A673 (cell line): ENCODE measurements at regions of chr10 and their contacts with region 1.

Region 1: GRCh38 chr10:98404571-98405359 is 10.2 kb downstream of the PYROXD2 start:
- DNase-seq: peak; percentile 23
- H3K4me3 ChIP-seq: no peak overlapping the region
- H3K27ac ChIP-seq: no peak overlapping the region
- H3K4me1 ChIP-seq: peaks cover 7% of the 10 kb centered on the region
- H3K27me3 ChIP-seq: no peaks in the 10 kb centered on the region
- CTCF ChIP-seq: no peak

Region 2: DNA sequence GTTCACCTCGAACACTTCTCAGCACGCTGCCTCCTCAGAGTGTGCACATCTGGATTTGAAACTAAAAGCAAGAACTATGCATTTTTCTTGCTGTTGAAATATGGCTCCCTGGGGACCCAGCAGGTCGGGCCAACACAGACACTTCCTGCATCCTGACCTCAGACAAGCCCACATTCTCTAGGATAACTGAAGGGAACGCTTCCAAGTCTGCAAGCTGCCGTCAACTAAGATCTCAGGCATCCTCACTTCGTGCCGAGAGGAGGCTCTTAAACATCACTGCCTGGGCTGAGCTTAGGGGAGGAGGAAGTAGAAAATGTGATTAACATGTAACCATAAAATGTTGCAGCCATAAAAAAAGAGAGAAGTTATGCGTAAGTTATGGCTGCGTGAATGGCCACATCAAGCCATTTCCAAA is 55.2 kb before region 1 on chr10:
- CTCF ChIA-PET with region 1: no interaction called
- POLR2A ChIA-PET with region 1: no interaction called
- intact Hi-C with region 1: loop called (anchors 10 kb)
- DNase-seq: peak; percentile 80
- H3K4me3 ChIP-seq: no peak overlapping the region
- H3K27ac ChIP-seq: no peak overlapping the region
- H3K4me1 ChIP-seq: no peaks in the 10 kb centered on the region
- H3K27me3 ChIP-seq: peaks cover 21% of the 10 kb centered on the region
- CTCF ChIP-seq: no peak

Region 3: GRCh38 chr10:98619446-98619845 is 214.7 kb after region 1 on chr10:
- CTCF ChIA-PET with region 1: no interaction called
- POLR2A ChIA-PET with region 1: no interaction called
- intact Hi-C with region 1: no loop called
- DNase-seq: peak; percentile 23
- H3K4me3 ChIP-seq: no peak overlapping the region
- H3K27ac ChIP-seq: no peak overlapping the region
- H3K4me1 ChIP-seq: peaks cover 7% of the 10 kb centered on the region
- H3K27me3 ChIP-seq: no peaks in the 10 kb centered on the region
- CTCF ChIP-seq: no peak